WTC11 (cell line): ENCODE measurements at regions of chr3 and their contacts with region 1.

Region 1: DNA sequence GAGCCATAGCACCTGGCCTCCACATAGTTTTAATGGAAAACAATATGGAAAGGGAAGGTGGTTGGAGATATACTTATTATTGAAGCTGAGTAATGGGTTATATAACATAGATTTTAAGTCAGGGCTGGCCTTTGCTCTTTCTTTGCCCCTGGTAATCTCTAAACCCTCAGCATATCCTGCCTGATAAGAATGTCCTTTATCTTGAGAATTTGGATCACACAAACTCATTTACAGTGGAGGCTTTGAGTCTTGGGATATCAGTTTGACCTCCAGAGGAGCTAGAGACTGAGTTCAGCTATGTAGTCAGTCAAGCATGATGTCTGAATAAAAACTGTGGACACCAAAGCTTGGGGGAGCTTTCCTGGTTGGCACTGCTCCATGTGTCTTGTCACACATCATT is 9.0 kb upstream of the C3orf33 start:
- DNase-seq: no peak
- ATAC-seq: no peak
- H3K4me3 Mint-ChIP-seq: no peak overlapping the region
- H3K27ac Mint-ChIP-seq: no peak overlapping the region
- H3K4me1 Mint-ChIP-seq: no peaks in the 10 kb centered on the region
- H3K27me3 Mint-ChIP-seq: no peaks in the 10 kb centered on the region
- CTCF ChIP-seq: no peak

Region 2: GRCh38 chr3:155791190-155791589 is 23.8 kb before region 1 on chr3:
- CTCF ChIA-PET with region 1: no interaction called
- POLR2A ChIA-PET with region 1: interaction called, 11 read pairs
- DNase-seq: no peak
- ATAC-seq: peak; percentile 51
- H3K4me3 Mint-ChIP-seq: no peak overlapping the region
- H3K27ac Mint-ChIP-seq: 0 out of 2 replicates have a peak overlapping the region, but pooled peaks have one; percentile 11
- H3K4me1 Mint-ChIP-seq: peaks cover 12% of the 10 kb centered on the region
- H3K27me3 Mint-ChIP-seq: no peaks in the 10 kb centered on the region
- CTCF ChIP-seq: no peak